ENCODE measurements at regions of chr12 and their contacts with region 1.

Region 1: GRCh38 chr12:89135976-89136634 is 216.2 kb downstream of the DUSP6 start:
- DNase-seq: no peak

Region 2: DNA sequence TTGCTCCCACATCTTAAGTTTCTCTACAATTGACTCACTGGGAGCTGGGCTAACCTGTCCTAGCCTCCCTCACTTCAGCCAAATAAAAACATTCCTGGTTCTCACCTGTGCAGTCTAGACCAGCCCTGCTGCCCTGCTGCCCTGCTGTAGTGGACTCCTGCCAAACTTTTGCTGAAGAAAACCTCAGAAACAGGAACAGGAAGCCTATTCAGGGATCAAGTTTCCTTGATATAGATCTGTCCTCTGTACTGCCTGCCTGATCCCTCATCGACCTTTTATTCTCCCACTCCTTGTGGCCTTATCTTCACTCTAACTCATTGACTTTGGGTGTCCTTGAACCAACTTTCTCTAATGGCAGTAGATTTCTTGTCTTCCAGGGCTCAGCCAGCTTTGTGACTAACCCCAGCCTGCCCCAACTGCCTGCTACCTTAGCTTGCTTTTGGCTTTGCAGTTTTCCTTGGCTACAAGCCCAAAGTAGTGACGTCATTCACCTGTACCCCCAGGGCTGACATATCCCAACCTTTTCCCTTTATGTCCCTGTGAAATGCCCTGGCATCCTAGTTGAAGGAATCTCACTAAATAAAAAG is 18.6 kb before region 1 on chr12:
- intact Hi-C with region 1: no loop called
- DNase-seq: no peak

Region 3: GRCh38 chr12:89179983-89180382 is 43.9 kb after region 1 on chr12:
- intact Hi-C with region 1: loop called (anchors 2 kb)
- DNase-seq: no peak

Region 4: DNA sequence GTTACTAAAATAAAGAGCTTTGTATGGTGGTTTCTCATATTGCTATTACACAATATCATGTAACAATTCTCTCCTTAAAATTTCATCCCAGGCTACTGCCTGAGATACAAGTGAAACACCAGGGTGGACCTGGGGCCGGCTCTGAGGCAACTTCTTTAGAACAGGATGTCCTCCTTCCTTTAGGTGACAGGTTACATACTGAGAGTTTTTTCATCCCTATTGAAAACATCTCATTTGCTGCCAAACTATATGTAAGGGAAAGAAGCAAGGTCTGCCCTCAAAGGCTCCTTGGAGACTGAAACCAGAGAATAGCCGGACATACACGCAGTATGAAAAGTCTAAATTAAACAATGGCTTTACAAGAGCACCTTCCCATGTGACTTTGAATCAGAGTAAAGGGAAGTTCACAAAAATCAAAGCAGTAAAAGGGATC is 76.2 kb after region 1 on chr12:
- intact Hi-C with region 1: loop called (anchors 2 kb)
- DNase-seq: no peak